ENCODE measurements at regions of chr10 and their contacts with region 1.

Region 1: DNA sequence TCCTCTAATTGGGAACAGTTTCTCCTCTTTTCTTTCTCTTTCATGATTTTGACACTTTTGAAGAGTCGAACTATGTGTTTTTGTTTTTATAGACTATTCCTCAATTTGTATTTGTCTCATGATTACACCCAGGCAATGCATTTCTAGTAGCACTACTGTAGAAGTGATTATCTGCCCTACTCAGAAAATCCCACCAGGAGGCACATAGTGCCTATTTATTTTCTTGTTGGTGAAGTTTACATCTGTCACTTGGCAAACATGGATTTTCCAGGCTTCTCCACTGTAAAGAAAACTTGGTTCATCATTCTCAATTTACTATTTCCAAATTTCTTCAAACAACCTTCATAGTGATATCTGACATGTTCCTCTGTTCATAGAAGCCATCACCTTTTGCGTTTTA is 893.9 kb downstream of the CCSER2 start:
- DNase-seq: no peak
- ATAC-seq: no peak

Region 2: DNA sequence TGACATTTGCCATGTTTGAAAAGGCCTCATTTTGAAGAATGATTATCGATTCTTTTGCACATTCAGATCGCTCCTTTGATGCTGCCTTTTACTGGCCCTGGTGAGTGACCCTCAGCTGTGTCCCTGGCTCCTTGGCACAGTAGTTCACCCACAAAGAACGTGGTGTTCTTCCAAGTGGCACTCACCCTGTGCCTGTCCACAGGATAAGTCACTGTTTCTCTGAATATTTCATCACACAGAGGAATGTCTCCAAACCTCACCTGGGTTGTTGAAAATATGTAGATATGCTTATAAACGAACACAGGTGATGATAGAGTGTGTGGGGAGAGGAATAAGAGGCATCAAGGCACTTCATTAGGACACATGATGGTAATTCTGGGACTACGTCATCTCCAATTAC is 83.2 kb before region 1 on chr10:
- intact Hi-C with region 1: no loop called
- DNase-seq: no peak
- ATAC-seq: no peak

Region 3: GRCh38 chr10:85187047-85187446 is 35.3 kb before region 1 on chr10:
- intact Hi-C with region 1: no loop called
- DNase-seq: no peak
- ATAC-seq: no peak

Region 4: DNA sequence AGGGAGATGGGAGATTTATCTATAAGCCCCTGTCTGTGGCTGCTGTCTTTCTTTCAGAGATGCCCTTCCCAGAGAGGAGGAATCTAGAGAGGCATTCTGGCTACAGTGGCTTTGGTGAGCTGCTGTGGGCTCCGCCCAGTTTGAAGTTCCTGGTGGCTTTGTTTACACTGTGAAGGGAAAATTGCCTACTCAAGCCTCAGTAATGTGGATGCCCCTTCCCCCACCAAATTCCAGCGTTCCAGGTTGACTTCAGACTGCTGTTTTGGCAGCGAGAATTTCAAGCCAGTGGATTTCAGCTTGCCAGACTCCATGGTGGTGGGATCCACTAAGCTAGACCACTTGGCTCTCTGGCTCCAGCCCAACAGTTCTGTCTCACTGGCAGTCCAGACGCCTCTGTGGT is 57.7 kb after region 1 on chr10:
- intact Hi-C with region 1: no loop called
- DNase-seq: no peak
- ATAC-seq: no peak

Region 5: GRCh38 chr10:85508159-85508558 is 285.9 kb after region 1 on chr10:
- intact Hi-C with region 1: loop called (anchors 10 kb)
- DNase-seq: no peak
- ATAC-seq: no peak